Activated CD4-positive, alpha-beta memory T cell treated with anti-CD3 and anti-CD28 coated beads for 36 hours (primary cell): ENCODE measurements at regions of chr18 and their contacts with region 1.

Region 1: DNA sequence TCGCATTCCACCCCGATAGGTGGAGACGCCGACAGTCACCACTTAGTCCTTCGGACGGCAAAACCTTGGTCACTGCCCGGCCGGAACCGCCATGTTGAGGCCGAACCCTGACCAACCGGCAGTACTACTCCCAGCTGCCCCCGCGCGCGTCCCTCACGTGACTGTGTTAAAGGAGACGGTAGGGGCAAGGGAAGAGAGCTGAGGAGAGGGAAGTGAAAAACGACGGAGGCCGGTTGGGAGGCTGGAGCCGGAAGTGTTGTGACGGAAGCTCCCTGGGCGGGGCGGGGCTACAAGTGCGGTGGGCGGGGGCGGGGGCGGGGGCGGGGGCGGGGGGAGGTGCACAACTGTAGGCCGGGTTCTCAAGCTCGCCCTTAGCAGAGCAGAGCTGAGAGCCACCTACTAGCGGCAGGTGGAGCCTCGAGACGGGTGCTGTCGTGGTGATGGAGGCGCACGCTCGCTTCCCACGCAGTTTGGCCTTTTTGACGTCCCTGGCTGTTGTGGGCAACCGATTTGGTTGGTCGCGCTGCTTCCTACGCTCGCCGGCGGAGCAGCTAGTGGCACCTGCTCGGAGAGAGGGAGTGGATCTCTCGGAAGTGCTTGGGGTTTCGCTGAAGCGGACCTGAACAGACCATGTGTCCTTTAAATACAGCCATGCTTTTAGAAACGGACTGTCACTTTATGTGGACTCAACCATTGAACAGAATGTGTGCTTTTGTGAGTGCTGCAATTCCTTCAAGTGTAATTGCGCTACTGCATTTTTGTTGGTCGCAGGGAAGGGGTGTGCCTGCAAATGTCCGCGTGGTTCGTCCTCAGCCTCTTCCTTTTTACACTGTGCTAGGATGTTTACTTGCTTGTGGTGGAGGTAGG is at the start of gene TRAPPC8:
- DNase-seq: peak; percentile 95
- H3K4me3 Mint-ChIP-seq: peak within 1 kb of the TSS; percentile 100
- H3K27ac Mint-ChIP-seq: peak within 1 kb of the TSS; percentile 99
- H3K4me1 Mint-ChIP-seq: peaks cover 36% of the 10 kb centered on the region
- H3K27me3 Mint-ChIP-seq: no peaks in the 10 kb centered on the region
- total RNA-seq, gene TRAPPC8: 30.4 to 34.2 TPM

Region 2: DNA sequence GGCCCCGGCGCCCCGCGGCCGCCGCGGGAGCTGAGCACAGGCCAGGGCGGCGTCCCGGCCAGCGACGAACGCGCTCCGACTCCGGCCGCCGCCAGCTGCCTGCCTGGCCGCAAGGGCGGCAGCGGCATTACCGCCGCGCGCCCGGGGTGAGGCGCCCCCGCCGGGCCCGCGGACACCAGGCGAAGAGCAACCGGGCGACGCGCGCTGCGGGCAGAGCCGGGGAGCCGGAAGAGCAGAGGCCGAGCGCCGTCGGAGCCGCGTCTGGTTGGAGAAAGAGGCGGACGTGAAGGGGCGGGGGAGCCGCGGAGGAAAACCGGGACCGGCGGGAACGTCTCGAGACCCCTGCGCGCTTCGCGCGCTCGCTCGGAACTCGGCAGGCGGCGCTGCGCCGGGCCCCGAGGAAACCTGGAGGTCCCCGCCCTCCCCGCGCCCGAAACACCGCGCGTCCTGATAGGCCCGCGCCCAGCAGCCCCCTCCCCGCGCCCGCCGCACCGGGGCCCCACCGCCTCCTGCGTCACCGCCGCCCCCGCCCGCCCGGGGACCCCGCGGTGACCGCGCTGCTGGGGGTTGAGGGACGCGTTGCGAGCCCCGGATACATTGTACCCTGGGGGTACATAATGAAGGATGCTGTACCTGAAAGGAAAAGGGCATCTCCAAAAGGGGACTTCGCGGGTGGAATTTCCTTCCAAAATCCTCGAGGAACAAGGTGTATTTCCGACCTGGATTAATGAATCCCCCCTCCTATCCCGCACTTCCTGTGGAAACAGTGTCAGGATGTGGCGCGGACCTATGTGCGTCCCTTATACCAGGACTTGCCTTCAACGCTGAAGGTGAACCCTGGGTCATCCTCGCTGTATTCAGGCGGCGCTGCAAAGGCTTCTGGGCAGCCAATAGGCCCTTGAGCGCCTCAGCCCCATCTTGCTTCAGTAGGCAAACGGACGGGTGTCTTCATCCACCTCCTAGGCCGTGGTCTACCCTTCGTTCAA is 257.8 kb before region 1 on chr18:
- CTCF ChIA-PET with region 1: no interaction called
- POLR2A ChIA-PET with region 1: no interaction called
- intact Hi-C with region 1: loop called (anchors 2 kb)
- DNase-seq: peak; percentile 69
- H3K4me3 Mint-ChIP-seq: peak overlapping the region; percentile 78
- H3K27ac Mint-ChIP-seq: peak overlapping the region; percentile 45
- H3K4me1 Mint-ChIP-seq: peaks cover 24% of the 10 kb centered on the region
- H3K27me3 Mint-ChIP-seq: peaks cover 36% of the 10 kb centered on the region

Region 3: GRCh38 chr18:31857526-31858106 is 85.6 kb before region 1 on chr18:
- CTCF ChIA-PET with region 1: no interaction called
- POLR2A ChIA-PET with region 1: no interaction called
- intact Hi-C with region 1: no loop called
- DNase-seq: no peak
- H3K4me3 Mint-ChIP-seq: no peak overlapping the region
- H3K27ac Mint-ChIP-seq: no peak overlapping the region
- H3K4me1 Mint-ChIP-seq: peaks cover 4% of the 10 kb centered on the region
- H3K27me3 Mint-ChIP-seq: no peaks in the 10 kb centered on the region

Region 4: GRCh38 chr18:31977270-31977872 is 34.1 kb after region 1 on chr18:
- CTCF ChIA-PET with region 1: interaction called, 11 read pairs
- POLR2A ChIA-PET with region 1: no interaction called
- intact Hi-C with region 1: no loop called
- DNase-seq: peak; percentile 38
- H3K4me3 Mint-ChIP-seq: no peak overlapping the region
- H3K27ac Mint-ChIP-seq: no peak overlapping the region
- H3K4me1 Mint-ChIP-seq: no peaks in the 10 kb centered on the region
- H3K27me3 Mint-ChIP-seq: no peaks in the 10 kb centered on the region

Region 5: DNA sequence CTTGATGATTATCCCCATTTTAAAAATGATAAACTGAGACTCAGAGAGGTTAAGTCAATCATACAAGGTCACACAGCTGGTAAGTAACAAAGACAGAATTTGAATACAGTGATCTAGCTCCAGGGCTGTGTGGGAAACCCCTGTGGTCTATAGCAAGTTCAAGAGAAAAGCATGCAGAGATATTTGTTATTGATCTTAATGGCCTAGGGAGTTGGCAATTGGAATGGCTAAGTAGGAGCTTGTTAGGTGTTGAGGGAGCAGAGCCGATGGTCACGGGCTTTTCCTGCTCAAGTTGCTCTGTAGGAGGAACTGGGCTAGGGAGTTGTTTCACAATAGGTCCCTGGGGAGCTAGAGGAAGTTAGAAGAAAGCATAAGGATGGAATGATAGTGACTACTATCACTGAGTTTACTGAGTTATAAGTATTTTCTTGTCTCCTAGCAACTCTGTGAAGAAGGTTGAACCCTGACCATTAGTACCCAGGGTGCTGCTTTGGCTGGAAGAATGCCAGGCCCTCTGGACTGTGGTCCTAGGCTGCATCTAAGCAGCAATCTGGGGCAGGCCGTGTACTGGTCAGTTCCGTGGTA is 105.4 kb after region 1 on chr18:
- CTCF ChIA-PET with region 1: no interaction called
- POLR2A ChIA-PET with region 1: interaction called, 4 read pairs
- intact Hi-C with region 1: loop called (anchors 2 kb)
- DNase-seq: peak; percentile 45
- H3K4me3 Mint-ChIP-seq: no peak overlapping the region
- H3K27ac Mint-ChIP-seq: peak overlapping the region; percentile 91
- H3K4me1 Mint-ChIP-seq: peaks cover 39% of the 10 kb centered on the region
- H3K27me3 Mint-ChIP-seq: no peaks in the 10 kb centered on the region